Caco-2 (cell line): ENCODE measurements at regions of chr17 and their contacts with region 1.

Region 1: DNA sequence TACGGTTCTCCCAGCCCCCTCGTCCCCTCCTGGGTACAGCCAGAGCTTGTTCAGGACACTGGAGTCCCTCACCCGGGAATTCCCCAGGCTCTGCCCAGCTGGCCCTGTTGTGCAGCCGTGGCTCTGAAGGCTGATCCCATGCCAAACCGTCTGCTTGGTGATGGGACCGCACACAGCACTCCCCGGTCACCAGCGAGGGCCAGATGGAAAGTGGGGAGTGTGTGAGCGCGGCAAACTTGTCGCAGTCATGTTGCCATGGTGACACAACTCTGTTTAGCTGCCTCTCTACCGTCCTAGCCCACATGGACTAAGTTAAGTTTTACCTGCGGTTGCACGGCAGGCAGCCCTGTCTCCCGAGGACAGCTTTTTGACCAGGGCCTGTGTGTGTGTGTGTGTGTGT is 107.9 kb downstream of the RAP1GAP2 start:
- DNase-seq: no peak
- H3K4me3 ChIP-seq: no peak overlapping the region
- H3K4me3 Mint-ChIP-seq: no peak overlapping the region
- H3K27ac Mint-ChIP-seq: no peak overlapping the region
- H3K4me1 ChIP-seq: peaks cover 24% of the 10 kb centered on the region
- H3K4me1 Mint-ChIP-seq: peaks cover 9% of the 10 kb centered on the region
- H3K27me3 ChIP-seq: no peaks in the 10 kb centered on the region
- H3K27me3 Mint-ChIP-seq: no peaks in the 10 kb centered on the region
- CTCF ChIP-seq: no peak

Region 2: DNA sequence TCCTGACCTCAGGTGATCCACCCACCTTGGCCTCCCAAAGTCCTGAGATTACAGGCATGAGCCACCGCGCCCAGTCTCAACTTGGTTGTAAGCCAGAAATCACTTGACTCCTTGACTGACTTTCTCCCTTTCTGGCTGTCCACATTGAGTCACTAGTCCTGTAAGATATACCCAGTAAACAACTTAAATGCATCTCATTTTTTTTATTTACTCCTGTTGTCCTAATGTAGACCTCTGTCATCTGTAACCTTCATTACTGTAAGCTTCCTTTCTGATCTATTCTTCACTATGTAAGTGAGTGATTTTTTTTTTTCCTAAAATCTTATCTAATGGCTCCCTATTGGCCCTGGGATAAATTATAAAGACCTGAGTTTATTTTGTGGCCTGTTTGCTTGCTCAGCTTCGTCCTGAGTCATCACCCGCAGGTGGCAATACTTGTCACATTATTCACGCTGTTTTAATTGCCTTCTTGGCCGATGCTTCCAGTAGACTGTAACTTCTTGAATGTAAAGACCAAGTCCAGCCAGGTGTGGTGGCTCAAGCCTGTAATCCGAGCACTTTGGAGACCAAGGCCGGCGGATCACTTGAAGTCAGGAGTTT is 269.7 kb before region 1 on chr17:
- CTCF ChIA-PET with region 1: no interaction called
- POLR2A ChIA-PET with region 1: no interaction called
- intact Hi-C with region 1: no loop called
- DNase-seq: no peak
- H3K4me3 ChIP-seq: no peak overlapping the region
- H3K4me3 Mint-ChIP-seq: no peak overlapping the region
- H3K27ac Mint-ChIP-seq: no peak overlapping the region
- H3K4me1 ChIP-seq: peaks cover 8% of the 10 kb centered on the region; the same call in 1 of the 2 replicates
- H3K4me1 Mint-ChIP-seq: peaks cover 20% of the 10 kb centered on the region
- H3K27me3 ChIP-seq: no peaks in the 10 kb centered on the region
- H3K27me3 Mint-ChIP-seq: no peaks in the 10 kb centered on the region
- CTCF ChIP-seq: no peak

Region 3: GRCh38 chr17:2853111-2853721 is 50.9 kb before region 1 on chr17:
- CTCF ChIA-PET with region 1: interaction called, 7 read pairs
- POLR2A ChIA-PET with region 1: no interaction called
- intact Hi-C with region 1: loop called (anchors 5 kb)
- DNase-seq: peak in 1 of 2 experiments; percentile 55
- H3K4me3 ChIP-seq: peak overlapping the region; percentile 81
- H3K4me3 Mint-ChIP-seq: peak overlapping the region; percentile 89
- H3K27ac Mint-ChIP-seq: no peak overlapping the region
- H3K4me1 ChIP-seq: peaks cover 30% of the 10 kb centered on the region
- H3K4me1 Mint-ChIP-seq: peaks cover 7% of the 10 kb centered on the region
- H3K27me3 ChIP-seq: no peaks in the 10 kb centered on the region
- H3K27me3 Mint-ChIP-seq: no peaks in the 10 kb centered on the region
- CTCF ChIP-seq: no peak

Region 4: GRCh38 chr17:2892305-2892971 is 11.7 kb before region 1 on chr17:
- CTCF ChIA-PET with region 1: no interaction called
- POLR2A ChIA-PET with region 1: interaction called, 4 read pairs
- intact Hi-C with region 1: loop called (anchors 1 kb)
- DNase-seq: peak in 1 of 2 experiments; percentile 55
- H3K4me3 ChIP-seq: no peak overlapping the region
- H3K4me3 Mint-ChIP-seq: no peak overlapping the region
- H3K27ac Mint-ChIP-seq: peak overlapping the region; percentile 80
- H3K4me1 ChIP-seq: peaks cover 36% of the 10 kb centered on the region
- H3K4me1 Mint-ChIP-seq: peaks cover 39% of the 10 kb centered on the region
- H3K27me3 ChIP-seq: no peaks in the 10 kb centered on the region
- H3K27me3 Mint-ChIP-seq: no peaks in the 10 kb centered on the region
- CTCF ChIP-seq: no peak